PC-9 (cell line): ENCODE measurements at regions of chr7 and their contacts with region 1.

Region 1: GRCh38 chr7:95104739-95105138 is 197.3 kb downstream of the PPP1R9A start:
- DNase-seq: no peak
- H3K4me3 ChIP-seq: no peak overlapping the region
- H3K27ac ChIP-seq: no peak overlapping the region
- H3K4me1 ChIP-seq: peaks cover 10% of the 10 kb centered on the region; the same call in 1 of the 2 replicates
- H3K27me3 ChIP-seq: no peaks in the 10 kb centered on the region
- CTCF ChIP-seq: no peak

Region 2: DNA sequence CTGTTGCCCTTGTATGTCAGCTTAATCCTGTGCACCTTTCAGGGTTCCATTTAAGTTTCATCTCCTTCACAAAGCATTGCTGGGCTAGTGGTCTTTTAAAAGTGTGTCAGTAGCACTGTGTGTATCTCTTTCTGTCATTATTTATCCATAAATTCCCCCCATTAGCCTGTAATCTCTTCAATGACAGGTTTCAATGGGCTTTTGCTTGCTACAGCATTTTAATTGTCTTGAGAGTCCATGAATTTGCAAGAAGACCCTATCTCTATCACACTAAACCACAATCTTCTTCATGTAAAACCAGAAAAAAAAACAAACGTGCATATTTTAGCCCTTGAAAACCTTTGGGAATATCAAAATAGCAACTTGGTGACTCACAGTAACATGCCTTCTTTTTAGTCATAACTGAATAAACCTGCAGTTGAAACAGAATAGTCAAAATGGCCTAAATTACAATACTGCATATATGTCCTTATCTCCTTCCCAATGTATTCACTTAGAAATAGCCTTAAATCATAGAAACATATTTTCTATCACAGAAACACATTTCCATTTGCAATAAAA is 101.0 kb after region 1 on chr7:
- CTCF ChIA-PET with region 1: no interaction called
- POLR2A ChIA-PET with region 1: no interaction called
- intact Hi-C with region 1: no loop called
- DNase-seq: peak in 1 of 2 experiments; percentile 42
- H3K4me3 ChIP-seq: no peak overlapping the region
- H3K27ac ChIP-seq: no peak overlapping the region
- H3K4me1 ChIP-seq: peaks cover 6% of the 10 kb centered on the region
- H3K27me3 ChIP-seq: no peaks in the 10 kb centered on the region
- CTCF ChIP-seq: no peak

Region 3: DNA sequence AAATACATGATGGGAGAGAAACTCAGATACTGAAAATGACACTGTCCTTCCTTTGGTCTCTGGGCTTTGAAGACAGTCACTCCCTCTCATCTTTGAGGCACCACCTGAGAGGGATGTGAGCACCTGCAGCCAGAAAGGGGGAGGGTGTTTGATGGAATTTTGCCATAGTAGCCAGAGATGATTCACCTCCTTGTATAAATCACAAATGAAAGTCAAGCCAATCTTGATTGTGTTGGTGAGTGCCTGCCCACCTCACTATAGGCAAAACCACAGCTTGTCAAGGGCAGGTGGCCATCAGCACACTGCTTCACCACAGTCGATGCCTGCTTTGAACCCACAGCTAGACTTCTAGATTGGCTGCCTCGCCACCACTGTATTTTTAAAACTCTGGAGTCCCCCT is 171.4 kb after region 1 on chr7:
- CTCF ChIA-PET with region 1: interaction called, 14 read pairs
- POLR2A ChIA-PET with region 1: no interaction called
- intact Hi-C with region 1: no loop called
- DNase-seq: peak in 1 of 2 experiments; percentile 17
- H3K4me3 ChIP-seq: no peak overlapping the region
- H3K27ac ChIP-seq: no peak overlapping the region
- H3K4me1 ChIP-seq: no peaks in the 10 kb centered on the region
- H3K27me3 ChIP-seq: no peaks in the 10 kb centered on the region
- CTCF ChIP-seq: no peak